Natural killer cell (primary cell): ENCODE measurements at regions of chr20 and their contacts with region 1.

Region 1: DNA sequence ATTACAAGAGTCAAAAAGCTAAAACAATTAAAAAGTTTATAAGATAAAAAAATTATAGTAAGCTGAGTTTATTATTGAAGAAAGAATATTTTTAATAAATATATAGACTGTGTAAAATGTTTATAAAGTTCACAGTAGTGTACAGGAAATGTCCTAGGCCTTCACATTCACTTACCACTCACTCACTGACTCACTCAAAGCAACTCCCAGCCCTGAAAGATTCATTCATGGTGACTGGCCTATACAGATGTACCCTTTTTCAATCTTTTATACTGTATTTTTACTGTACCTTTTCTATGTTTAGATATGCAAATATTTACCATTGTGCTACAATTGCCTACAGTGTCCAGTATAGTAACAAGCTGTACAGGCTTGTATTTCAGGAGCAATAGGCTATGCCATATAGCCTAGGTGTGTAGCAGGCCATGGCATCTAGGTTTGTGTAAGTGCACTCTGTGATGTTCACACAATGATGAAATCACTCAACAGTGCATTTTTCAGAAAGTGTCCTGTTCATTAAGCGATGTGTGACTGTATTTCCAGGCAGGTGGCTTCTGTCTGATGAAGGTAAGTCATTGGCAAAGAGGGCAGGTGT is 130.2 kb downstream of the BTBD3 start:
- DNase-seq: no peak
- ATAC-seq: no peak
- H3K4me3 ChIP-seq: no peak overlapping the region
- H3K4me3 Mint-ChIP-seq: no peak overlapping the region
- H3K27ac ChIP-seq: no peak overlapping the region
- H3K27ac Mint-ChIP-seq: no peak overlapping the region
- H3K4me1 ChIP-seq: peaks cover 4% of the 10 kb centered on the region
- H3K4me1 Mint-ChIP-seq: peaks cover 0 to 3% of the 10 kb centered on the region in 2 donors
- H3K27me3 ChIP-seq: no peaks in the 10 kb centered on the region
- H3K27me3 Mint-ChIP-seq: no peaks in the 10 kb centered on the region
- CTCF ChIP-seq: no peak

Region 2: DNA sequence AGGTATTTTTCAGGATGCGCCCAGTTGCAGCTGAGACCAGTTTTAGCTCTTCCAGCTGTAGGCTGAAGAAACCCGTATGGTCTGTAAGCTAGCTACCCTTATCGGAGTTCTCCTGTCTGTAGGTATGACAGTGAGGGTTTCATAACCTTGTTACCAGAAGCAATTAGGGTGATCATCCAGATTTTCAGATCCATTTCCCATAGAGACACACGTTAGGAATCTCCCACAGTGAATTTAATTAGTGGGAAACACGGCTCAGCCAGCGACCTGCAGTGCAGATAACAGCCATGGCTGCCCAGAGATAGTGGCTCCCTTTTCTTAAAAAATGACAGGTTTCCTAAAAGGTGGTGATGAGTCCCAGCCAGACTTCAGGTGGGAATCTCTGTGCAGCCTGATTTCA is 19.2 kb before region 1 on chr20:
- intact Hi-C with region 1: loop called (anchors 2 kb)
- DNase-seq: no peak
- ATAC-seq: no peak
- H3K4me3 ChIP-seq: no peak overlapping the region
- H3K4me3 Mint-ChIP-seq: no peak overlapping the region
- H3K27ac ChIP-seq: no peak overlapping the region
- H3K27ac Mint-ChIP-seq: no peak overlapping the region
- H3K4me1 ChIP-seq: no peaks in the 10 kb centered on the region
- H3K4me1 Mint-ChIP-seq: no peaks in the 10 kb centered on the region
- H3K27me3 ChIP-seq: no peaks in the 10 kb centered on the region
- H3K27me3 Mint-ChIP-seq: no peaks in the 10 kb centered on the region
- CTCF ChIP-seq: no peak